Activated B cell treated with CpG ODN at 0.5 μM for 24 hours (primary cell): ENCODE measurements at regions of chr2 and their contacts with region 1.

Region 1: GRCh38 chr2:202624133-202624532 is 10.6 kb upstream of the FAM117B start:
- DNase-seq: no peak
- ATAC-seq: no peak
- H3K4me3 Mint-ChIP-seq: no peak overlapping the region
- H3K27ac Mint-ChIP-seq: no peak overlapping the region
- H3K4me1 Mint-ChIP-seq: peaks cover 29% of the 10 kb centered on the region
- H3K27me3 Mint-ChIP-seq: no peaks in the 10 kb centered on the region
- CTCF ChIP-seq: no peak

Region 2: DNA sequence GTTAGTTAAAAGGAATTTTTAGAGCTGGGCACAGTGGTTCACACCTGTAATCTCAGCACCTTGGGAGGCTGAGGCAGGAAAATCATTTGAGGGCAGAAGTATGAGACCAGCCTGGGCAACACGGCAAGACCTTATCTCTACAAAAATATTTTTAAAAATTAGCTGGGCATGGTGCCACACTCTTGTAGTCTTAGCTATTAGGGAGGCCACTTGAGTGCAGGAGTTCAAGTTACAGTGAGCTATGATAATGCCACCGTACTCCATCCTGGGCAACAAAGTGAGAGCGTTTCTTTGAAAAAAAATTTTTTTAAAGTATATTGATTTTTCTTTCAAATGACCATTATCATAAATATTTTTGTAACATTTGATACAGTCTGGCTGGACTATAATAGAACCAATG is 83.0 kb before region 1 on chr2:
- CTCF ChIA-PET with region 1: no interaction called
- POLR2A ChIA-PET with region 1: no interaction called
- intact Hi-C with region 1: no loop called
- DNase-seq: no peak
- ATAC-seq: no peak
- H3K4me3 Mint-ChIP-seq: no peak overlapping the region
- H3K27ac Mint-ChIP-seq: no peak overlapping the region
- H3K4me1 Mint-ChIP-seq: no peaks in the 10 kb centered on the region
- H3K27me3 Mint-ChIP-seq: no peaks in the 10 kb centered on the region
- CTCF ChIP-seq: no peak

Region 3: DNA sequence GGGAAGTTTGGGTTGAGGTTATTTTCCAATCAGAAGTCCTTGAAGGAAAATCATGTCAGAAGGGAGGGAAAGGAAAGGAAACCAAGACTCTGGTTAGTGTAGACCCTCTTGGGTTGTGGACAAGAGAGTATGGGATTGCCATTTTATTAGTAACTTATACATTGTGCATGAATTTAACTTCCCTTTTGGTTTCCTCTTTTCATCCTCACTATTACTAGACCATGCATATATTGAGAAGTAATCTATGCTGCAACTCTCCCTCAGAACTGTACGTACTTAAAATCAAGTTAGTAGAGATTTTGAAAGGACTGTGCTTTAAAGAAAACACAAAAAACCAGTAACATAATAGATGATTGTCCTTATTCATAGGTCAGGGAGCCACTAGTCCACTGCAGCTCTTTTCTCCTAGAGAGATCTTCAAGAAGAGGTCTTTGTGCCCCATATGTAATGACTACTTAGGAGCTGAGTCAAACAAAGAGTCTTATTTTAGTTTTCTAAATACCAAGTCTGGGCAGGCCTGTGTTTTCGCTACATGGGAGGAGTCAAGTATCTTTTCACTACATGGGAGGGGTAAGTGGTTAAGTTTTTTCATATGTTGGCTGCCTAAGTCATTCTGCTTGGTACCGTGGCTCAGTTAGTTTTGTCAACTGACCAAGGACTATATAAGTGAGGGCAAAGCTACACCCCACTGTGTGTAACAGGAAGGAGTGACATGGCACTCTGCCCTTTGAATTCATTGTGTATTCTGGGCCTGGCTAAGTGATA is 14.6 kb before region 1 on chr2:
- CTCF ChIA-PET with region 1: no interaction called
- POLR2A ChIA-PET with region 1: interaction called, 8 read pairs
- intact Hi-C with region 1: loop called (anchors 2 kb)
- DNase-seq: no peak
- ATAC-seq: peak; percentile 81
- H3K4me3 Mint-ChIP-seq: peak overlapping the region; percentile 70
- H3K27ac Mint-ChIP-seq: peak overlapping the region; percentile 99
- H3K4me1 Mint-ChIP-seq: peaks cover 39% of the 10 kb centered on the region
- H3K27me3 Mint-ChIP-seq: no peaks in the 10 kb centered on the region
- CTCF ChIP-seq: no peak